OCI-LY7 (cell line): ENCODE measurements at regions of chr12 and their contacts with region 1.

Region 1: GRCh38 chr12:106736051-106736957 is 38.2 kb upstream of the RIC8B start:
- DNase-seq: peak; percentile 60
- H3K4me3 ChIP-seq: no peak overlapping the region
- H3K27ac ChIP-seq: no peak overlapping the region
- H3K4me1 ChIP-seq: no peaks in the 10 kb centered on the region
- CTCF ChIP-seq: peak; percentile 69

Region 2: DNA sequence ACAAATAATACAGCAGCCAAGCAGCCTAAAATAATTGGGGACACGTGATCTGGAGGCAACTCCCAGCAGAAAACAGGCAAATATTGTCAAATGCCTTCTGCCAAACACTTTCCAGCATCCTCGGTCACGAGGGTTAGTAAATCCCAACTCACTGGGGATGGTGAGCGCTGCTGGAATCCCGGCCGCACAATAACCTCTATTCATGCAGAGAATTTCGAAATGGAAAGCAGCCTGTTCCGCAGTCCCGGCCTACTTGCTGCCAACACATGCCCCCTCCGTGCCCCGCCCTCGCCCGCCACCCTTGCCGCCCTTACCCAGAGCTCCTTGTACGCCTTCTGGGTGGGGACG is 91.3 kb before region 1 on chr12:
- CTCF ChIA-PET with region 1: no interaction called
- POLR2A ChIA-PET with region 1: no interaction called
- intact Hi-C with region 1: no loop called
- DNase-seq: no peak
- H3K4me3 ChIP-seq: no peak overlapping the region
- H3K27ac ChIP-seq: no peak overlapping the region
- H3K4me1 ChIP-seq: no peaks in the 10 kb centered on the region
- CTCF ChIP-seq: no peak

Region 3: DNA sequence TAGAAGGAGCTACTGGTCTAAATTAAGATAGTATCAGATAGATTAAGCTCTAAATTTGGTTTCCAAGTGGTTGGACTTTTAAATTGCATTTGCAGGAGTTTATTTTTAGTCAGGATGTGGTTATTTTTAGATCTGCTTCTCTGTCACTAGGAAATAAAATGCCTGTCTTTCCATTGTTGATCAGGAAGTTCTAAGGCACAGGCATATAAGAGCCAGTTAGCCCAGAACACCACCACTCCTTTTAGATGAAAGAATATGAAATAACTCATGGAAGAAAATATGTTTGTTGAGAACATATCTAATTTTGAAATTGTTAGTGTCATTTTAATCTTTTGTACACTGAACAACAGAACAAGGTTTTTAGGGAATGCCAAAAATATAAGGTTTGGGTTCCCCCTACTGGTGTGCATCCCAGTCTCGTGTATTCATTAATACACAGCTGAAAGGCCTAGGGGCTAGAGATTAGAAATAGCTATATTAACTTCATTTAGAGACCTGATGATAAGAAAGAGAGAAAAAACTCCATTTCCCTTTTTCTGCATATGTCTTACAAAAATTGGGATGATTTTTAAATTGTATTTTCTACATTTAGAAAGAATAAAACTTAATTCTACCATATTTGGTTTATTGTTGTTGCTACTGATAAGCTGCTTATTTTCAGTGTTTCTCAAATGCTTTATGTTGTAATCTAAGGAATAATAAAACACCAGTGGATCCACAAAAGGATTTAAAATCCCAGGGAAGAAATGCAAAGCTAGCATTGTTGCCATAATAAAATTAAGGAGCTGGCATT is 105.4 kb after region 1 on chr12:
- CTCF ChIA-PET with region 1: interaction called, 3 read pairs
- POLR2A ChIA-PET with region 1: interaction called, 3 read pairs
- intact Hi-C with region 1: loop called (anchors 1 kb)
- DNase-seq: peak; percentile 62
- H3K4me3 ChIP-seq: no peak overlapping the region
- H3K27ac ChIP-seq: no peak overlapping the region
- H3K4me1 ChIP-seq: no peaks in the 10 kb centered on the region
- CTCF ChIP-seq: peak; percentile 94

Region 4: DNA sequence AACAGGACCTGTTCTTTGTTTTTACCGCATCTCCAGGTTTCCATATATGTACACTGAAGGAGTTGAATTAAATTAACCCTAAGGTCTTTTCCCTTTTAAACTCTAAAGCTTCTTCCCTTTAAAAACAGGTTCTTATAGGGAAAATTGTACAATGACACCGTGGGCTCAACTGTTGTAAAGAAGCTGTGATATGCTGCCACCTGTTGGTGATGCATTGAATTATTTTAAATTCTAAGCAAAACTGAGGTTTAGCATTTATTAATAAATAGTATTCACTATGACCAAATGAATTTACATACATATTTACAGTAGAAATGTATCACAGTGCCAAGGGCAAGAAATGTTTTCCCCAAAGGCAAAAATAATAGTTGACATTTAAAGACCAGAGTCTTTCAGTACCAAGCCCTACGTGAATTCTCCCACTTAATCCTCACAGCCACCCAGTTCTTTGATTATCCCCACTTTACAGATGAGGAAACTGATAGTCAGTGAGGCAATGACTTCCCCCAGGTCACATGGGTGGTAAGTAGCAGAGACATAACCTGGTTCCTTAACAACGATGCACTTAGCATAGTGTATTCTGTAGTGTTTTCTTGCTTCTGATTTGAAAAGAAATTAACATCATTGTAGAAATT is 183.7 kb after region 1 on chr12:
- CTCF ChIA-PET with region 1: no interaction called
- POLR2A ChIA-PET with region 1: no interaction called
- intact Hi-C with region 1: loop called (anchors 1 kb)
- DNase-seq: peak; percentile 57
- H3K4me3 ChIP-seq: no peak overlapping the region
- H3K27ac ChIP-seq: no peak overlapping the region
- H3K4me1 ChIP-seq: no peaks in the 10 kb centered on the region
- CTCF ChIP-seq: peak; percentile 92